Naive thymus-derived CD4-positive, alpha-beta T cell (primary cell): ENCODE measurements at regions of chr21 and their contacts with region 1.

Region 1: DNA sequence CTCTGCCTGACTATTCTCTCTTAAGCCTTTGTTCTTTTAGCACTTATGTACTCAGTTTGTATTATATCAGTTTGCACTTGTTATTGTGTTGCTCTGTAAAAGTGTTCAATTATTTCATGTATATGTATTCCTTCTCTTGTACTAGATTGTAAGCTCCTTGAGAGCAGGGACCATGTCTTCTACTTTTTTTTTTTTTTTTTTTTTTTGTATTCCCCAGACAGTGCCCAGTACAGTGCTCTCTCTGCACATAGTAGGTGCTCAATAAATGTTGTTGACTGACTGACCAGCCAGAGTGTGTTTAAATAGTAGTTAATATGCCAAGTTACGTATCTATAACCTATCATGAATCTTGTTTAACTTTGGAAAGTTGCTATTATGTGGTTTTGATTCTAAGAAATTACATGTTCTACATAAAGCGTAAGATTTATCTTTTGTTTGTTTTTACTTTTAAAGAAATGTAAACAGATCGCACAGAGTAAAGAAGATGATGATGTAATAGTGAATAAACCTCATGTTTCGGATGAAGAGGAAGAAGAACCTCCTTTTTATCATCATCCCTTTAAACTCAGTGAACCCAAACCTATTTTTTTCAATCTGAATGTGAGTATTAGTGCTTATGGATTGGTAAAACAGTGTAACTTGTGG is 16.1 kb downstream of the SON start:
- DNase-seq: no peak
- ATAC-seq: no peak
- H3K4me3 ChIP-seq: no peak overlapping the region
- H3K4me3 Mint-ChIP-seq: peak overlapping the region in 6 of 10 donors; percentile 8 to 56 (median 26)
- H3K27ac ChIP-seq: no peak overlapping the region
- H3K27ac Mint-ChIP-seq: peak overlapping the region in 3 of 9 donors; percentile 3 to 30 (median 6)
- H3K4me1 ChIP-seq: peaks cover 6 to 22% of the 10 kb centered on the region in 2 donors
- H3K4me1 Mint-ChIP-seq: peaks cover 42 to 94% (median 86%) of the 10 kb centered on the region in 7 donors
- H3K27me3 ChIP-seq: no peaks in the 10 kb centered on the region
- H3K27me3 Mint-ChIP-seq: no peaks in the 10 kb centered on the region

Region 2: GRCh38 chr21:33578959-33579542 is 20.2 kb after region 1 on chr21:
- CTCF ChIA-PET with region 1: no interaction called
- POLR2A ChIA-PET with region 1: interaction called, 9 read pairs
- intact Hi-C with region 1: loop called in 1 of 2 experiments (anchors 2 kb)
- DNase-seq: no peak
- ATAC-seq: no peak
- H3K4me3 ChIP-seq: no peak overlapping the region
- H3K4me3 Mint-ChIP-seq: no peak overlapping the region
- H3K27ac ChIP-seq: no peak overlapping the region
- H3K27ac Mint-ChIP-seq: peak overlapping the region in 5 of 9 donors; percentile 33 to 59 (median 45)
- H3K4me1 ChIP-seq: no peaks in the 10 kb centered on the region
- H3K4me1 Mint-ChIP-seq: peaks cover 0 to 11% (median under 1%) of the 10 kb centered on the region in 7 donors
- H3K27me3 ChIP-seq: no peaks in the 10 kb centered on the region
- H3K27me3 Mint-ChIP-seq: no peaks in the 10 kb centered on the region